ENCODE measurements at regions of chr10 and their contacts with region 1.

Region 1: DNA sequence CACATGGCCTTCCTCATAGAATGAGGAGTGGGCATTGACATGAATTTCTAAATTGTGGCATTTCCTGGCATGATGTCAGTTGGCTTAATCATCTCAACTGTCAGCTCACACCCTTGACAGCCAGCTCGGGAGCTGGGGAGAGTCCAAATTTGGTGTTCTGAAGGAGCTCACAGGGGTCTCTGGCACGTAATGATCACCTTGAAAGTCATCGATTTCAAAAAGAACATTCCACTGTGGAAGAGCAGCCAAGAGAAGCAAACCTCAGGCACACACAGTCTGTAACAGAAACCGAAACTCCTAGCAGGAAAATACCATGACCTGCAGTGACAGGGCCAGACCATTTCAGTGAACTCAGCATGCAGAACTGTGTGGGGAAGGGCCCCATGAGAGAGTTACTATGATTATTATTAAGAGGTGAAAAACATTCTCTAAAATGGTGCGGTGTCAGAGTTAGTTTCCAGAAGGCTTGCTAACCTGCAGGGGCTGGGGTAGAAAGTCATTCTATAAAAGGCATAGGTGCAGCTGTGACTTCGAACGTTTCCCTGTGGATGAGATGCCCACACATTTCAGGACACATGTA is 26.4 kb upstream of the KLF6 start:
- DNase-seq: peak in 1 of 2 experiments; percentile 35
- H3K4me3 ChIP-seq: no peak overlapping the region; the same call in 1 of the 2 replicates
- H3K27ac ChIP-seq: peak overlapping the region; percentile 96
- H3K4me1 ChIP-seq: peaks cover 53% of the 10 kb centered on the region
- H3K27me3 ChIP-seq: no peaks in the 10 kb centered on the region
- CTCF ChIP-seq: no peak

Region 2: DNA sequence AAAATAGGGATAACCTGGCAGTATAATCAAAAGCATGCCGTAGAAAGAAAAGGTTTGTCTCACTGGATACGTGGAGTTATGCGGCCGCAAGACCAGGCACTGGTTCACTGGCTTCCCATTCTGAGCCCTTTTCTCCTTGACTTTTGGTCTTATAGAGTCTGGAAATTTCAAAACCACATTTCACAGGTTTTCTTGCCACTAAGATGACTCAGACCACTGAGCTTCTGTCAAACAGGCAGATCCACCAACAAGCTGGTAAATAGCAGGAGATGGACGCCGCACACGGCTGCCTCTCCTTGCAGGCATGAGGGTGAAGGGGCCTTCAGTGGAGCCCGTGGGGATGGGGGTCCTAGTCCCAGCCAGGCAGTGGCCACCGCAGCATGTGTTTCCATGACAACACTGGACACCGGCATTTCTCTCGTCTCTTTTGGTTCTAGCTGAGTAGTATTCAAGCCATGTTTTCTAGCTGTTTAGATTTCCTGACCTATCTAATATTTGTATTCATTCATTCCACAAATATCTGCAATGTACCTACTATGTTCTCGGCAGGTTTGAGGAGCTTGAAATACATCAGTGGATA is 81.9 kb before region 1 on chr10:
- CTCF ChIA-PET with region 1: no interaction called
- POLR2A ChIA-PET with region 1: no interaction called
- intact Hi-C with region 1: no loop called
- DNase-seq: peak; percentile 39 to 78
- H3K4me3 ChIP-seq: no peak overlapping the region
- H3K27ac ChIP-seq: 0 out of 2 replicates have a peak overlapping the region, but pooled peaks have one; percentile 1
- H3K4me1 ChIP-seq: peaks cover 21% of the 10 kb centered on the region
- H3K27me3 ChIP-seq: no peaks in the 10 kb centered on the region
- CTCF ChIP-seq: no peak

Region 3: GRCh38 chr10:3754727-3755439 is 56.5 kb before region 1 on chr10:
- CTCF ChIA-PET with region 1: no interaction called
- POLR2A ChIA-PET with region 1: interaction called, 3 read pairs
- intact Hi-C with region 1: loop called (anchors 2 kb)
- DNase-seq: peak; percentile 68 to 96
- H3K4me3 ChIP-seq: no peak overlapping the region
- H3K27ac ChIP-seq: peak overlapping the region; percentile 92
- H3K4me1 ChIP-seq: peaks cover 55% of the 10 kb centered on the region
- H3K27me3 ChIP-seq: no peaks in the 10 kb centered on the region
- CTCF ChIP-seq: no peak

Region 4: GRCh38 chr10:3828404-3829155 is 17.2 kb after region 1 on chr10:
- CTCF ChIA-PET with region 1: no interaction called
- POLR2A ChIA-PET with region 1: no interaction called
- intact Hi-C with region 1: loop called (anchors 1 kb)
- DNase-seq: no peak
- H3K4me3 ChIP-seq: no peak overlapping the region
- H3K27ac ChIP-seq: no peak overlapping the region
- H3K4me1 ChIP-seq: peaks cover 31% of the 10 kb centered on the region
- H3K27me3 ChIP-seq: no peaks in the 10 kb centered on the region
- CTCF ChIP-seq: no peak

Region 5: DNA sequence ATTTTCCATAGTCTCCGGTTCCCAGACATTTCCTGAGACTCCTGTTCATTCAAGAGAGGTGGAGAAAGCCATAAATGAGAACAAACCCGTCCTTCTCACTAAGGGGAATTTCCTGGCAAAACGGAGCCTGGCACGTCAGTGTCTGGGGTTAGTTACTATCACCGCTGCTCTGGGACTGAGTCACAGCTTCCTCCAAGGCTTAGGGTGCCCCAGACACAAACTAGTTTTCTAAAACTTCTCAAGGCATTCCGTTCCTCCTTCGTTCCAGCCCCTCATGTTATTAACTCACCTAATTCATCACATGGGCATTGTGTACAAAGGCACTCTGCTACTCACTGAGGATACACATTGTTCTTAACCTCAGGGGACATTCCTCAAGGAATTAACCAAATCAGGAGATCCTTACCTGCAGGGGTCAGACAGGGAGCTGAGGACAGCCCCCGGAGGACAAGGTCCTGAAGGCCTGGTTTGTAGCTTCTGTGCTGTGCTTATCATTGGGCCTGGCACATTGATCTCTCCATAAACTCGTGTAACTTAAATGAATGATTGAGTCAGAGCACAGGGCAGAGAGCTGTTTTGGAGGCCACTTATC is 76.6 kb after region 1 on chr10:
- CTCF ChIA-PET with region 1: no interaction called
- POLR2A ChIA-PET with region 1: interaction called, 3 read pairs
- intact Hi-C with region 1: loop called (anchors 2 kb)
- DNase-seq: peak; percentile 50 to 89
- H3K4me3 ChIP-seq: no peak overlapping the region
- H3K27ac ChIP-seq: peak overlapping the region; percentile 90
- H3K4me1 ChIP-seq: peaks cover 41% of the 10 kb centered on the region
- H3K27me3 ChIP-seq: no peaks in the 10 kb centered on the region
- CTCF ChIP-seq: no peak

Region 6: DNA sequence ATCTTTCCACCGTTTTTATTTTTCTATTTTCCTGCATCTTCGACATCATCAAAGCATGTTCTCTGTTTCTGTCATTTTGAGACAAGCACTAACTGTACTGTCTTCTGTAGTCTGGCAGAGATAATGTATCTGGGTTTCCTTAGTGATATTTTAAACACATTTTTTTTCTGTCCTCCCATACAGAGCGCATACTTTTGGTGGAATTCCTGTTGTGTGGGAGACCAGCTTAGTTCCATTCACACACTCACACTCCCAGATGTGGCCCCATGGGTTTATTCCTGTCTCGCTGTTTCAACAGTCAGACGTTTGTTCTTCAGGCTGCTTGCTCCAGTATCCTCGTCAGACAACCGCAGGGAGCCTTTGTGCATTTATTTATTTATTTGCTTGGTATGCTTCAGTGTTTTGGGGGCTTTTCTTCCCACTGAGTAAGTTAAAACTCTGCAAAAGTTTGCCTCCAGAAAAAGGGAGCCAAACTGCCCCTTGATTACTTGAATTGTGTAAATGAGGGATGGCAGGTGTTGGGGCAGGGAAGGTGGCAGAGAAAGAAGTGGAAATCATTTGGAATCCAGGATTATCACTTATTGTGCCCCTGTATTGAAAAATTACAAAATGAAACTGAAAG is 430.5 kb after region 1 on chr10:
- CTCF ChIA-PET with region 1: no interaction called
- POLR2A ChIA-PET with region 1: no interaction called
- intact Hi-C with region 1: loop called (anchors 1 kb)
- DNase-seq: peak in 1 of 2 experiments; percentile 27
- H3K4me3 ChIP-seq: no peak overlapping the region
- H3K27ac ChIP-seq: no peak overlapping the region
- H3K4me1 ChIP-seq: peaks cover 22% of the 10 kb centered on the region
- H3K27me3 ChIP-seq: no peaks in the 10 kb centered on the region
- CTCF ChIP-seq: no peak

Measured in PC-9 (cell line).